Activated T-helper 1 cell treated with anti-CD3 and anti-CD28 coated beads, Interleukin-12 subunit alpha, Interleukin-12 subunit beta, Interleukin-2, Interleukin-4 antibody, amounts not matched to agents 30 ng/mL and 10 ng/mL and 1 ng/mL, durations not matched to agents 14 hours and 24 hours and 36 hours (primary cell): ENCODE measurements at regions of chr6 and their contacts with region 1.

Region 1: GRCh38 chr6:122491919-122492555 is 20.4 kb upstream of the SERINC1 start:
- DNase-seq: peak; percentile 45
- H3K4me3 Mint-ChIP-seq: no peak overlapping the region
- H3K27ac Mint-ChIP-seq: no peak overlapping the region
- H3K4me1 Mint-ChIP-seq: peaks cover 13% of the 10 kb centered on the region
- H3K27me3 Mint-ChIP-seq: peaks cover 2% of the 10 kb centered on the region

Region 2: DNA sequence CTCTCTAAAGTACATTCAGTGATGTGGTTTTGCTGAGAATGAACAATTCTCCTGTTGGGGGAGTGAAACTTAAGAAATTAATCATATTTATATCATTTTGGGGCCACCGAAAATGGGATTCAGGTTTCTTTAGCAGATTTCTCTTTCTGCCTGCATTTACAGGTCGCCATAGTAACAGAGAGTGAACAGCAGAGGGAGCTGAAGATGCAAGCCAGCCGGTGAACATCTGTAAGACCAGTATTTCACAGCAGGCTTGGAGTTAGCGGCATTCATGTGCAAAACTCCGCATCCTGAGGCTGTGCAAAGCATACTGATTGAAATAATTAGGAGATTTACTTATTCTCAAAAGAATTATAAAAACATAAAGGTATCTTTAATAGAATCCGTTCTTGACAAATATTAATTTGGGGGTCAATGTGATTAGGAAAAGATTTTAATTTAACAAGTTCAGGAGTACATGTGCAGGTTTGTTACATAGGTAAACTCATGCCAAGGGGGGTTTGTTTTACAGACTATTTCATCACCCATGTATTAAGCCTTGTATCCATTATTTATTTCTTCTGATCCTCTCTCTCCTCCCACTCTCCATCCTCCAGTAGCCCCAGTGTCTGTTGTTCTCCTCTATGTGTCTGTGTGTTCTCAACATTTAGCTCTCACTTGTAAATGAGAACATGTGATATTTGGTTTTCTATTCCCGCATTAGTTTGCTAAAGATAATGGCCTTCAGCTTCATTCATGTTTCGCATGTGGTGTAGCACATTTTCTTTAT is 110.4 kb before region 1 on chr6:
- intact Hi-C with region 1: loop called (anchors 1 kb)
- DNase-seq: peak; percentile 38
- H3K4me3 Mint-ChIP-seq: no peak overlapping the region
- H3K27ac Mint-ChIP-seq: no peak overlapping the region
- H3K4me1 Mint-ChIP-seq: no peaks in the 10 kb centered on the region
- H3K27me3 Mint-ChIP-seq: peaks cover 14% of the 10 kb centered on the region

Region 3: GRCh38 chr6:122530440-122531046 is 38.5 kb after region 1 on chr6:
- intact Hi-C with region 1: loop called (anchors 1 kb)
- DNase-seq: peak; percentile 50
- H3K4me3 Mint-ChIP-seq: no peak overlapping the region
- H3K27ac Mint-ChIP-seq: no peak overlapping the region
- H3K4me1 Mint-ChIP-seq: no peaks in the 10 kb centered on the region
- H3K27me3 Mint-ChIP-seq: peaks cover 28% of the 10 kb centered on the region

Region 4: DNA sequence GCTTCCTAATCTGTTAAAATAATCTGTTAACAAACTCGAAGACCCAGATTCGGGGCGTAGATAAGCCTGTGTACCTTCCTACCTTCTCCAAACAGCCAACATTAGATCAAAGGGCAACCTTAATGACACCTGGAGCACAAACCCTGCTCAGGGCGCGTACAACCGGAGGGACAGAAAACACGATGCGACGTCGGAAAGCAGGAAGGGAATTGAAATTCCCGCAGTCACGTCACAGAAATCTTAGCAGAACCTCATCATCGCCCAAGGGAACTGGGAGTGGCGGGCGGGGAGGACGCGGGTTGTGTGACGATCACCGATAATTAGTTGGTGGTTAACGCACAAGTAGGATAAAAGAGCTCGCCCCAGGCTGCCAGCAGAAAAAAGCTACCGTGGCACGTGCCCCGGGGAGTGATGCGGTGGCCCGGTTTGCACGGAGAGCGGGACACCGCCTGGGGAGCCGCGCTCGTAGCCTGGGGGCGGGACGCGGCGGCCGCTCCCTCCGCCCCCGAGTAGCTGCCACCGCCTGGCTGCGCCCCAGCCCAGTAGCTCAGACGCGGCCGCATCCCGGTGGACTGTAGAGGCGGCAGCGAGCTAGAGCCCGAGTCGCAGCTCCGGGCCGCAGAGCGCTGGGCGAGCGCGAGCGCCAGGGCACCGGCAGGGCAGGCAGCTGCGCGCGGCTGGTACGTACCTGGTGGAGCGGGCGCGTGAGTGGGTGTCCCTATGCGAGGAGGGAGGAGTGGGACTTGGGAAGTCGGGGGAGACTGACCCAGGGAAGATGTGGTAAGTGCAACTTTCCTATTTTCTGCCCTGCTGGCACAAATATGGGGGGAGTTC is 118.0 kb after region 1 on chr6 and contains the start of gene PKIB:
- intact Hi-C with region 1: no loop called
- DNase-seq: peak; percentile 26
- H3K4me3 Mint-ChIP-seq: peak within 1 kb of the TSS; percentile 81
- H3K27ac Mint-ChIP-seq: no peak within 1 kb of the TSS
- H3K4me1 Mint-ChIP-seq: peaks cover 19% of the 10 kb centered on the region
- H3K27me3 Mint-ChIP-seq: peaks cover 23% of the 10 kb centered on the region
- total RNA-seq, gene PKIB: 0.44 TPM in 1 of 2 replicates, not detected in the other

Region 5: GRCh38 chr6:122730775-122731386 is 238.8 kb after region 1 on chr6:
- intact Hi-C with region 1: loop called (anchors 5 kb)
- DNase-seq: no peak
- H3K4me3 Mint-ChIP-seq: no peak overlapping the region
- H3K27ac Mint-ChIP-seq: no peak overlapping the region
- H3K4me1 Mint-ChIP-seq: no peaks in the 10 kb centered on the region
- H3K27me3 Mint-ChIP-seq: peaks cover 4% of the 10 kb centered on the region

Region 6: GRCh38 chr6:122839477-122839876 is 347.4 kb after region 1 on chr6:
- intact Hi-C with region 1: loop called (anchors 1 kb)
- DNase-seq: peak; percentile 31
- H3K4me3 Mint-ChIP-seq: no peak overlapping the region
- H3K27ac Mint-ChIP-seq: no peak overlapping the region
- H3K4me1 Mint-ChIP-seq: no peaks in the 10 kb centered on the region
- H3K27me3 Mint-ChIP-seq: peaks cover 7% of the 10 kb centered on the region